AG04450 (cell line): ENCODE measurements at regions of chr11 and their contacts with region 1.

Region 1: DNA sequence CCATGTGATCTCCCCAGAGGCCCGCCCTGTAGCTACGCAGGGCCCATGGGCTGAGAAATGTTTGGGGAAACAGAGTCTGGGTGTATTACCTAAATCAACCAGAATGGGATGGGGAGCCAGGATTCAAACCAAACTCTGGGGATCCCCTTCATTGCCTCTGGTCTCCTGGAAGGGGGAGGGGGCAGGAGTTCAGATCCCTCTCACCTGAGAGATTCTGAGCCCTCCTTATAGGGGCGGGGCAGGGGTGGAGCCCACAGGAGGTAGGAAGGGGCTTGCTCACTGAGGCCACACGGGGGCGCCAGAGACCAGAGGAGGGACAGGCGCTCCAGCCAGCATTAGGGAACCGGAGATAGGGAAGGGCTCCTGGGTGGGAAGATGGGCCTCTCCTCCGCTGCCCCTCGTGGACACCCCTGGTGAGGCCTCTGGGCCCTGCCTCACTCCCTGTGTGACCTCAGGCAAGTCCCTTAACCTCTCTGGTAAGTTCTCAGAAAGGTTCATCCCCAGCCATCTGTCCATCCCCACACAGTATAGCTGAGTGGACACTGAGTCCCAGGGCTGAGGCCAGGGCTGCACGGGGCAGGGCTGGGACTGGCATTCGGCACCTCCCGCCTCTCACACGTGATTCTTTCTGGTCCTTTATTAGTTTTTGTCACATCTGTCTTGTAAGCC is 2.7 kb upstream of the CDC42BPG start:
- DNase-seq: peak; percentile 63
- H3K4me3 ChIP-seq: no peak overlapping the region
- H3K27ac ChIP-seq: peak overlapping the region; percentile 21
- H3K27me3 ChIP-seq: no peaks in the 10 kb centered on the region
- CTCF ChIP-seq: peak; percentile 96

Region 2: DNA sequence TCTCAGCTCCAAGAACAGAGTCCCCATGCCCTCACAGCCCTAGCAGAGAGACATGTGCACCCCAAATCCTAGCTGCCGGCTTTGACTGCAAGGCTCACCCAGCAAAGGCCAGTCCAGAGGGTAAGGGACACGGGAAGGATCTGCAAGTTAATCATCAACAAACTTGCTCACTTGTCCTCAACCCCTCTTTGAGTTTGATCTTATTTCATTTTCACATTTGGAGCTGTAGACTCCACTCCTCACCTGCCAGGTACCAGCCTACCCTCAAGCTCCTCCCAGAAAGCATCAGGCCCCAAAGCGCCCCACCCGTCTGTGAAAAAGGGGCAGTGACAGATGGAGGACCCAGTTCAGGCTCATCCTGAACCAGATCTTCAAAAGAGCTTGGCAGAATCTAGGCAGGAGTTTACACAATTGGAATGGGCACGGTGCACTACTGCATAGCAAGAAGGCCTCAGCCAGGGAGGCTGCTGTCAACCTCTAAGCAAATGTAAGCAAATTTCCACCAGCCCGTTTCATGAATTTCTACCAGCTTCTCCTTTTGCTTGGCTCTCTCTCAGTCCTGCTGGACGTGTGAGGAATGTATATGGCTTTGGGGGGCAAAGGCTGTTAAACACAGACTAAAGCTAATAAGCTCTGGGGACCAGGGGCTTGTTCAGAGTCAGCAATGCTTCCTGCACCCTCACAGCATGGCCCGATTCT is 25.8 kb after region 1 on chr11:
- CTCF ChIA-PET with region 1: interaction called, 12 read pairs
- POLR2A ChIA-PET with region 1: interaction called, 9 read pairs
- DNase-seq: no peak
- H3K4me3 ChIP-seq: no peak overlapping the region; the same call in 1 of the 2 replicates
- H3K27ac ChIP-seq: no peak overlapping the region
- H3K27me3 ChIP-seq: no peaks in the 10 kb centered on the region
- CTCF ChIP-seq: no peak

Region 3: GRCh38 chr11:64887757-64888405 is 40.7 kb after region 1 on chr11:
- CTCF ChIA-PET with region 1: interaction called, 86 read pairs
- POLR2A ChIA-PET with region 1: interaction called, 3 read pairs
- DNase-seq: no peak
- H3K4me3 ChIP-seq: no peak overlapping the region
- H3K27ac ChIP-seq: no peak overlapping the region
- H3K27me3 ChIP-seq: no peaks in the 10 kb centered on the region
- CTCF ChIP-seq: peak; percentile 81

Region 4: GRCh38 chr11:64894070-64894796 is 47.1 kb after region 1 on chr11:
- CTCF ChIA-PET with region 1: interaction called, 86 read pairs
- POLR2A ChIA-PET with region 1: interaction called, 3 read pairs
- DNase-seq: no peak
- H3K4me3 ChIP-seq: no peak overlapping the region
- H3K27ac ChIP-seq: no peak overlapping the region
- H3K27me3 ChIP-seq: no peaks in the 10 kb centered on the region
- CTCF ChIP-seq: peak; percentile 87